BJ (cell line): ENCODE measurements at regions of chr21 and their contacts with region 1.

Region 1: GRCh38 chr21:32826329-32827167 is 55.0 kb upstream of the PAXBP1 start:
- DNase-seq: no peak
- H3K4me3 ChIP-seq: no peak overlapping the region
- H3K27me3 ChIP-seq: no peaks in the 10 kb centered on the region
- CTCF ChIP-seq: peak; percentile 66

Region 2: DNA sequence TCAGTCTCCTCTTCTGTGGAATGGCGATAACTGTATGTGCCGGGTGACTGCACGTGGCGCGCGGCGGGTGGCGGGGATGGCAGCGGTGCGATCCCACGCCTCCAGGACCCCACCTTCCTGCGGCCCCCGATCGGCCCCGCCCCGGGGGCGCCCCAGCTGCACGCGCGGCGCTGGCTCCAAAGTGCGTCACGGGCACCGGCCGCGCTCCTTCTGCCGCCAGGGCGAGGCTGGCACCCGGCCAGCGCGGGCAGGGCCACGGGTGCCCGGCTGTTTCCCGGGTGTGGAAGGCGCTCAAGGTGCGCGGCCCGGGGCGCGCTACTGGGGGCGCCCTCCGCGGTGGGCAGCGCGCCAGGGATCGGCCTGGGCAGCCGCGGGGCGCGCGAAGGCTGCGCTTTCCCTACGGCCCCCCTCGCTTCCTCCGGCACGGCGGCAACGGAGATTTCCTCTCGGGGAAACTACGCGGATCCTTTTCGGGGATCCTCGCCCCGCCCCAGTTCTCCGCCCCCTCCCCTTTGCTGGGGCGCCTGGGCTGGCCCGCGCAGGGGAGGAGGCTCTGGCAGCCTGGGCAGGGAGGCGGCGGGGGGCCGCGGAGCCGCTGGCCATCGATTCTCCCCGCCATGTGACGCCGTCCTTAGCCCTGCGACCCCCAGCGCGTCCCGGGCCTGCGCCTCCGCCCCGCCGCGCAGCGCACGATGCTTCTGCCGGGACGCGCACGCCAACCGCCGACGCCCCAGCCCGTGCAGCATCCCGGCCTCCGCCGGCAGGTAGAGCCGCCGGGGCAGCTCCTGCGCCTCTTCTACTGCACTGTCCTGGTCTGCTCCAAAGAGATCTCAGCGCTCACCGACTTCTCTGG is 414.2 kb before region 1 on chr21 and contains the start of gene EVA1C:
- CTCF ChIA-PET with region 1: no interaction called
- POLR2A ChIA-PET with region 1: no interaction called
- DNase-seq: no peak
- H3K4me3 ChIP-seq: peak within 1 kb of the TSS; percentile 70
- H3K27me3 ChIP-seq: no peaks in the 10 kb centered on the region
- CTCF ChIP-seq: no peak
- polyA plus RNA-seq, gene EVA1C: 9.6 and 12.2 TPM in 2 replicates

Region 3: GRCh38 chr21:32653311-32653901 is 173.1 kb before region 1 on chr21:
- CTCF ChIA-PET with region 1: interaction called, 12 read pairs
- POLR2A ChIA-PET with region 1: no interaction called
- DNase-seq: no peak
- H3K4me3 ChIP-seq: no peak overlapping the region
- H3K27me3 ChIP-seq: no peaks in the 10 kb centered on the region
- CTCF ChIP-seq: peak; percentile 66

Region 4: DNA sequence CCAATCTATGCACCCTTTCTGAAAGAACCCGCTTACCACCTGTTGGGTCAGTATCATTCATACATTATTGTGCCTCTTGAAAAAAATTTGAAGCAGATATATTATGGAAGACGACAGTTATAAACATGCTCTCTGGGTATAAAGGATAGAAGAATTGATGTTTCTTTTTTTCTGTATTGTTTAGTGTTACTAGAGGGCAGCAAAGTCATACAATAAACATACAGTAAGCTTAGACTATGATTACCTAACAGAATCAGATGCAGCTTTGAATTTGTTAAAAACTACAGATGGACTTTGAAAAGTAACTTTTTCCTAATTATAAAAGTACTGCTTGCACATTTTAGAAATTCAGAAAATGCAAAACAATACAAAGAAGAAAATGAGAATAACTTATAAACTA is 43.9 kb before region 1 on chr21:
- CTCF ChIA-PET with region 1: interaction called, 11 read pairs
- POLR2A ChIA-PET with region 1: no interaction called
- DNase-seq: no peak
- H3K4me3 ChIP-seq: no peak overlapping the region
- H3K27me3 ChIP-seq: no peaks in the 10 kb centered on the region
- CTCF ChIP-seq: no peak

Region 5: DNA sequence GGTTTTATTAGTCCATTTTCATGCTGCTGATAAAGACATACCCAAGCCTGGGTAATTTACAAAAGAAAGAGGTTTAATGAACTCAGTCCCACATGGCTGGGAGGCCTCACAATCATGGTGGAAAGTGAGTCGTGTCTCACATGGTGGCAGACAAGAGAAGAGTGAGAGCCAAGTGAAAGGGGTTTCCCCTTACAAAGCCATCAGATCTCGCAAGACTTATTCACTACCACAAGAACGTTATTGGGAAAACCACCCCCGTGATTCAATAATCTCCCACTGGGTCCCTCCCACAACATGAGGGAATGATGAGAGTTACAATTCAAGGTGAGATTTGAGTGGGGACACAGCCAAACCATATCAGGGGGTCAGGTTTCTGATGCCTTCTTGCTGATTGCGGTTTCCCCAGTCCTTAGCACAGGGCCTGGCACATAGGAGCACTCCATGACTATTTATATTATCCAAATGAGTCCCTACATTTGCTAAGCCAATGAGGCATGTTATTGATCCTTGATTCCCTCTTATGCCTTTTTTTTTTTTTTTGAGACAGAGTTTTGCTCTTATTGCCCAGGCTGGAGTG is 19.6 kb before region 1 on chr21:
- CTCF ChIA-PET with region 1: no interaction called
- POLR2A ChIA-PET with region 1: no interaction called
- DNase-seq: no peak
- H3K4me3 ChIP-seq: no peak overlapping the region
- H3K27me3 ChIP-seq: no peaks in the 10 kb centered on the region
- CTCF ChIP-seq: no peak

Region 6: DNA sequence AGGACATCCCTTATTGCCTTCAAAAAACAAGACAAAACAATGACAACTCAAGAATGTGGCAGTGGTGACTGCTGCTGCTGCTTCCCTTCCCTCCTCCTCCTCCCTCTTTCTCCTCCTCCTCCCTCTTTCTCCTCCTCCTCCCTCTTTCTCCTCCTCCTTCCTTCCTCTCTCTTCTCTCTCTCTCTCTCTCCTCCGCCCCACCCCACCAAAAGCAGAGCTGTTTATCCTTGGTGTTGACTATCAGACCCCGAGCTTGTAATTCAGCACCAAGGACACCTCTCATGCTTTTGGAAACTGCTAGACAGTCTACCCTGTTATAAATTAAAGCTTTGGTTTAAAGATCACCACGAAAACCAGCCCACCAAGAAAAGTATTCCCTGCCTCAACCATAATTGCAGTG is 330.8 kb after region 1 on chr21:
- CTCF ChIA-PET with region 1: no interaction called
- POLR2A ChIA-PET with region 1: no interaction called
- DNase-seq: no peak
- H3K4me3 ChIP-seq: no peak overlapping the region
- H3K27me3 ChIP-seq: 0 out of 2 replicates have a peak, but pooled peaks cover 3% of the 10 kb centered on the region
- CTCF ChIP-seq: no peak